HEK293 (cell line): ENCODE measurements at regions of chr19 and their contacts with region 1.

Region 1: DNA sequence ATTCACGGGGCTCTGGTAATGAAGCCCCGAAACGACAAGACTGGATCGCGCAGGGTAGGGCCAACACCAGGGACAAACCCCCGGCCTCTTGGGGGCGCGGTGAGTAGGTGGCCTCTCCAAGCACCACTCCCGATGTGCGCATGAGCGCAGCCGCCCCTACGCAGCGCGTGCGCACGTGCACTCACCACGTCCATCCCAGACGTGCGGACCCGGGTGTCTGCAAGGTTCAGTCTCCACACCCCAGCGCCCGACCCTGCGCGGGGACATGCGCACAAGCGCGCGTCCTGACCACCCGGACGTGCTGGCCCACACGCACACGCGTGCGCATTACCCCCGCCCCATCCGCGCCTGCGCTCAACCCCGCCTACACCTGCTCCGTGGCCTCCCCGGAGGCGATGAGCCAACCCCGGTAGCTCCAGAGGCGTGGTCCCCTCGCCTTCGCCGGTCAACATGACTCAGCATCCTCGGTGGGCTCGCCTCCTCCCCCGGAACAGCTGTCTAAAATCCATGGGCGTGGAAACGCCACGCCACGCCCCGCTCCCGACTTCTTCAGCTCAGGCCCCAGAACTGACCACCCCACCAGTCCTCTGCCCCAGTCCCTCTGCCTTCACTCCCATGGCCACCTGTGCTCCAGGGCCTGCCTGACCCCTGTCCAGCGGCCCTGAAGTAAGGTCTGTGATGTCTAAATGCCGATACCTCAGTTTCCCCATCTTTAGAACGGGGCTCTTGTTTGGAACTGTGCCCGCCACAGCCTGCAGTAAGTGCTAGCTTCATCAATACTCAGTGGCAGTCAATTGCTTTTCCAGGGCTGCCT is 5.6 kb upstream of the GPI start:
- H3K4me3 ChIP-seq: peak overlapping the region; percentile 39
- H3K27ac ChIP-seq: peak overlapping the region; percentile 89
- H3K4me1 ChIP-seq: peaks cover 8% of the 10 kb centered on the region
- CTCF ChIP-seq: peak; percentile 99

Region 2: GRCh38 chr19:34370983-34371382 is 11.6 kb after region 1 on chr19:
- CTCF ChIA-PET with region 1: interaction called, 11 read pairs
- POLR2A ChIA-PET with region 1: interaction called, 11 read pairs
- H3K4me3 ChIP-seq: no peak overlapping the region
- H3K27ac ChIP-seq: no peak overlapping the region; the same call in 1 of the 2 replicates
- H3K4me1 ChIP-seq: peaks cover 11% of the 10 kb centered on the region
- CTCF ChIP-seq: no peak